PC-3 (cell line): ENCODE measurements at regions of chr3 and their contacts with region 1.

Region 1: GRCh38 chr3:169218314-169218983 is 445.1 kb downstream of the MECOM start:
- DNase-seq: peak; percentile 82
- ATAC-seq: peak; percentile 99
- H3K4me3 ChIP-seq: no peak overlapping the region
- H3K27ac ChIP-seq: no peak overlapping the region
- H3K4me1 ChIP-seq: peaks cover 5% of the 10 kb centered on the region; the same call in 1 of the 2 replicates
- H3K27me3 ChIP-seq: no peaks in the 10 kb centered on the region
- CTCF ChIP-seq: peak; percentile 86

Region 2: DNA sequence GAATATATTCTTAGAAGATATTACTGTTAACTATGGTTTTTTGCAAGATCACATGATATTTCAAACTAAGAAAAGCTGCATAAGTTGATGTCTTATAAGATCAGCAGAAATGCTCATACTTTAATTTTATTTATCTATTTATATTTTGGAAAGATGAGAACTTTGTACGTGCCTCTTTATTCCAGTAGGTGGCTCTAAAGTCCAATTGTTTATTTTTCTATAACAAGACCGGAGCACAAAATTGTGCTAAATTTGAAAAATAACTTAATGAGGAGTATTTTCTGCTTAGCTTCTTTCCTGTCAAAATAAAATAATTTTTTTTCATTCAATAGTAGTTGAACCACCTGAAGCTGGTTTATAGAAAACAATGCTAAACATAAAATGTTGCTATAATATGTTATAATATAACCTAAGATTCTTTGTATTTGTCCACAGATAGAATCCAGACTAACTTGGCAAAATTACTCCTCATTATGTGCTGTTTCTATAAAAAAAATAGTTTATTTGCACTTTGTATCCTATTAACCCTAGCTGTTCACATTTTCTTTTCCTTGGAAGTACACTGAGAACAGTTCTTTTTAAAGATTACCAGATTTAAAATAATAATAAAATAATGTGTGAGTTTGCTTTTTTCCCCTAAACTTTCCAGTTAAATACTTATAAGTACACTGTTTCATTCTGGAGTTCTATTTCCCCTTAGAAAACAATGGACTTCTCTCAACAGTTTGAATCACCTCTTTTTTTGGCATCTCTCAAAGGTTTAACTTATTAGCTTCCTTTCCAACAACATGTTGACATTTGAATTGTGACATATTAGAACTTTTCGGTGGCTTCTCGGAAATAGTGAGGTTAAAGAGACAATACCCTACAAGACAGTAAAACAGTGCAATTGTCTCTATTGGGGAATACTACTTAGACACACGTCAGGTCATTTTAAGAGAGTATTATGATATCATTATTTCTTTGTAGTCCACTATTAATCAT is 85.0 kb before region 1 on chr3:
- CTCF ChIA-PET with region 1: no interaction called
- POLR2A ChIA-PET with region 1: no interaction called
- intact Hi-C with region 1: loop called (anchors 5 kb)
- DNase-seq: peak; percentile 63
- ATAC-seq: peak; percentile 67
- H3K4me3 ChIP-seq: no peak overlapping the region
- H3K27ac ChIP-seq: no peak overlapping the region; the same call in 1 of the 2 replicates
- H3K4me1 ChIP-seq: peaks cover 23% of the 10 kb centered on the region
- H3K27me3 ChIP-seq: no peaks in the 10 kb centered on the region
- CTCF ChIP-seq: peak; percentile 80

Region 3: DNA sequence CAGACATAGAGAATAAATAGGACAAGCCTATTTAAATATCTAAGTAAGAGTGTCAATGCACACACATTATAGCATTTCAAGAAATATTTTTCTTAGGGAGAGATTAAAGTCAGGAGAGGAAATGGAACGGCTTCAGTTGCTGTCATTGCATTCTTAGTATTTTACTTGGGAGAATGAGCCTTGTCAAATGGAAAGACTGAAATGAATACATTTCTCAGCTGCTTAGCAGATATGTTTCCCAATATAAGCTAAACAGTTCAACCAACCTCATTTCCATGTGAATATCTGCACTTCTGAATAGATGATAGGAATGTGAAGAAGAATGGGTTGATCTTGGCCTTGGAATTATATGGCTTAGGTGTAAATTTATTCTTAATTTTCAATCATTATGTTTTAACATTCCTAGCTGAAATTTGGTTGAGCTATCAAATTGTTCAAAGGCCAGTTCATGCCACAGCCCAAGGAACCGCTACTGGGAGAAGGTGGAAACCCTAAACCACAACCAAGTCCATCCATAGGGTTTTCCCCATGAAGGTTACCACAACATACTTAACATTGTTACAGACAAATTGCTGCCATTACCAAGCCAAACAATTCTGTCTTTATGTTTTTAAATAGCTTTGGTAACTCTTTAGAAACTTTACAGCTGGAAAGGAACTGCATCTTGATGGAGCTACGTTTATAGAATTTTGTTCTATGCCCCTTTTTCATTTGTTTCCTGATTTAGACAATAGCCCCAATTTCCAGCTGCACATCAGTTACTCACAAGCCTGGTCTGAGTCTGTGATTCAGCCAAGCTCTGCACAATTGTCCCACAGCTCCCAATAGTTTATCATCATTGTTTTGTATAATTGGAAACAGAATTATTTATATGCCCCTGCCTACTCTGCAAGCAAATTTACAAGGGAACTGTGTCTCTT is 14.6 kb before region 1 on chr3:
- CTCF ChIA-PET with region 1: no interaction called
- POLR2A ChIA-PET with region 1: no interaction called
- intact Hi-C with region 1: no loop called
- DNase-seq: no peak
- ATAC-seq: no peak
- H3K4me3 ChIP-seq: no peak overlapping the region
- H3K27ac ChIP-seq: no peak overlapping the region
- H3K4me1 ChIP-seq: peaks cover 8% of the 10 kb centered on the region
- H3K27me3 ChIP-seq: no peaks in the 10 kb centered on the region
- CTCF ChIP-seq: no peak

Region 4: DNA sequence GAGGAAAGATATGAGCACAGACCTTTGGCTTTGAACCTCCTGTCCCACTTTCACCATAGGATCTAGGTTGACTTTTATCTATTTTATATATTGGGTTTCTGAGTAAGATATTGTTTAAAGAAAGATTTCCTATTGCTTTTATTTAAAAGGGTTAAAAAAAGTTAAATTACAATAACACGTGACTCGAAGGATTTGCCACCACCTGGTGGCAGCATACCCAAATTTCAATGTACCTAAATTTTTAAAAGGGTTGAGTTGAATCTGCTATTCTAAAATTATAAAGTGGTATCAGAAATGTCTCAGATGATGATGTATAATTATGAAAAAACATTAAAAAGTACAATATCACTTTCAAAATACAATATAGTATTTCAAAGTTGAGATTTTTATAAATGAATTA is 76.7 kb after region 1 on chr3:
- CTCF ChIA-PET with region 1: no interaction called
- POLR2A ChIA-PET with region 1: no interaction called
- intact Hi-C with region 1: loop called (anchors 2 kb)
- DNase-seq: peak; percentile 52
- ATAC-seq: no peak
- H3K4me3 ChIP-seq: no peak overlapping the region
- H3K27ac ChIP-seq: no peak overlapping the region
- H3K4me1 ChIP-seq: peaks cover 7% of the 10 kb centered on the region; the same call in 1 of the 2 replicates
- H3K27me3 ChIP-seq: no peaks in the 10 kb centered on the region
- CTCF ChIP-seq: peak; percentile 71

Region 5: DNA sequence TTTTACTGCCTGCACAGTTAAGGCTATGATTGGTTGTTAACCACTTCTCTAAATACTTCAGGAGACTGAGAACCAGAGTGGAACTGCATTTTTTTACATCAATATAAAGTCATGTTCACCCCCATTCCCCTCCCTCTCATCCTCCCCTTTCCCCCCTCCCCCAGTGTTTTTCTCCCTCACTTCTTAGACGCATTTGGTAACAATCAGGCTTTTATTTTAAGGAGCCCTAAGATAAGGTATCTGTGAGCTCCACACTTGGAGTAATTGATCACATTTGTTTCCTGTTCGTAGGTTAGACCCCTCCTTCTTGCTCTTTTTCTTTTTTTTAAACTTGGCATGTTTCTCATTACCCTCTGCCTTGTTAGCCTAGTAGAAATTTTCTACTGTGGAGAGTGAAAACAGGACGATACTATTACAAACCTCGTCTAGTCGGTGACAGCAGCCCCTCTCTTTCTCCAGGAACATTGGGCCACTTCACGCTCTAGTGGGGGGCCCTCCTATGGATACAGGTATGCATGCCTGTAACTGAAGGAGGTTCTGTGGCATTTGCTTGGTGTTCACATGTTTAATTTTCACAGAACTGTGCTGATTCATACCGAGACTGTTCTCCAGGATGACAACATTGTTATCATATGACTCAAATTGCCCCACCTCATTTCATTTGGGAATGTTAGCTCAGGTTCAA is 130.6 kb after region 1 on chr3:
- CTCF ChIA-PET with region 1: no interaction called
- POLR2A ChIA-PET with region 1: no interaction called
- intact Hi-C with region 1: loop called (anchors 5 kb)
- DNase-seq: peak; percentile 97
- ATAC-seq: peak; percentile 85
- H3K4me3 ChIP-seq: peak overlapping the region; percentile 47
- H3K27ac ChIP-seq: peak overlapping the region; percentile 89
- H3K4me1 ChIP-seq: peaks cover 52% of the 10 kb centered on the region
- H3K27me3 ChIP-seq: no peaks in the 10 kb centered on the region
- CTCF ChIP-seq: no peak

Region 6: DNA sequence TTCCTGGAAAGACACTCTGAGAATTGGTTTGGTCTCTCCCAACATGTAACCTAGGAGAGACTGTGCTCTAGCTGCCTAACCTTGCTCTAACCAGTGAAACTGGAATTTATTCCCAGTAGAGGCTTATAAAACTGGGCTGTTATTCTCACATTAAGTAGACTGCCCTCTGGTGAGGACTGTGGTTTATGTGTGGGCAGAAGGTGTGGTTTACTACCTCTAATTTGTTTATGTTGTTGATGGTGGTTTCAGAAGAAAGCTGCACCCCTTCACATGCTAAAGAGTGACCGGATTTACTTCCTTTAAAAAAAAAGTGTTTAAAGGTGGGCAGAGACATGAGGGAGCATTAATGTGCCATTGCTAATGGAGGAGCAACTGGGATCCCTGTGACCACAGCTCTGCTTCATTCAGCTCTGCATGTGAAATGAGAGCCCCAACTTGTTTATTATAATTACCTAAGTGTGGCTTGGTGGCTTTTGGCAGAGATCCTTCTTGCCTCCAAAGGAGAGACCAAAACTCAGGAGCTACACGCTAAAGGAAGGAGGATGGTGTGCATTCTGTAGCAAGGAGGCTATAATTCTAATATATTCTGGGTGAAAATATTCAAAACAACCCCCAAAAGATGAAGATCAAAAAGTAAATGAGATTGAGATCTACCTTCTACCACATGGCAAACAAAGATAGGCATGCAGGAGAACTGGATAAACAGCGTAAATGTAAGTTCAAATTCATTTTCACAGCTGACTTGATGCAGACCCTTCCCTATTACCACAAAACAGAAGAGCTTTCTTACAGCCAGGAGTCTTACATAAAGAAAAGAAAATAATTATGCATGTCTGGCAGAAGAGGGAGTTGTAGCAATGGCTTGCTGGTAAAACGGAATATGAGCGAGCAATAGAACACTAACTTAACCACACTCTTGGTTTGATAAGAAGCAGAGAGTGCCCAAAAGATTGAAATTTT is 172.1 kb after region 1 on chr3:
- CTCF ChIA-PET with region 1: no interaction called
- POLR2A ChIA-PET with region 1: no interaction called
- intact Hi-C with region 1: loop called (anchors 2 kb)
- DNase-seq: peak; percentile 57
- ATAC-seq: peak; percentile 87
- H3K4me3 ChIP-seq: no peak overlapping the region
- H3K27ac ChIP-seq: no peak overlapping the region
- H3K4me1 ChIP-seq: 0 out of 2 replicates have a peak, but pooled peaks cover 11% of the 10 kb centered on the region
- H3K27me3 ChIP-seq: no peaks in the 10 kb centered on the region
- CTCF ChIP-seq: peak; percentile 59

Region 7: DNA sequence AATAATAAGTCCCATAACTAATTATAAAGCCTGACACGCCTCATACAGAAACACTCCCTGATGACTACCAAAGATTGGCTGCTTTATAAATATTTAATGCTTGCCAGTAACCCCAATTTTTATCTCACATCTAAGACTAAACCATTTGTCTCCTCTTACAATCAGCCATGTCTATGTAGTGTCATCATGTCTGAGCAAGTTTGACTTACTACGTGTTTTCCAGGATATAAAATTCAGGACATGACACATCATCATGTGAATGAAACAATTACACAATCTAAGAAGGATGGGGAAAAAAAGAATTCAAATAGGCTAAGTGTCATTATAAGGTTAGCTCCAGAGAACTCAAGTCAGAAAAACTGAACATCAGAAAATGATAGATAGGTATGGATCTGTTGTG is 236.4 kb after region 1 on chr3:
- CTCF ChIA-PET with region 1: no interaction called
- POLR2A ChIA-PET with region 1: no interaction called
- intact Hi-C with region 1: no loop called
- DNase-seq: peak; percentile 82
- ATAC-seq: peak; percentile 77
- H3K4me3 ChIP-seq: no peak overlapping the region
- H3K27ac ChIP-seq: peak overlapping the region; percentile 75
- H3K4me1 ChIP-seq: peaks cover 25% of the 10 kb centered on the region
- H3K27me3 ChIP-seq: no peaks in the 10 kb centered on the region
- CTCF ChIP-seq: no peak

Region 8: GRCh38 chr3:169509359-169509758 is 290.9 kb after region 1 on chr3:
- CTCF ChIA-PET with region 1: no interaction called
- POLR2A ChIA-PET with region 1: no interaction called
- intact Hi-C with region 1: loop called (anchors 1 kb)
- DNase-seq: no peak
- ATAC-seq: no peak; the same call in 1 of the 2 replicates
- H3K4me3 ChIP-seq: no peak overlapping the region
- H3K27ac ChIP-seq: no peak overlapping the region
- H3K4me1 ChIP-seq: no peaks in the 10 kb centered on the region
- H3K27me3 ChIP-seq: no peaks in the 10 kb centered on the region
- CTCF ChIP-seq: no peak

Region 9: GRCh38 chr3:169668957-169669681 is 450.7 kb after region 1 on chr3:
- CTCF ChIA-PET with region 1: no interaction called
- POLR2A ChIA-PET with region 1: no interaction called
- intact Hi-C with region 1: loop called (anchors 1 kb)
- DNase-seq: peak; percentile 86
- ATAC-seq: peak; percentile 91
- H3K4me3 ChIP-seq: peak overlapping the region; percentile 75
- H3K27ac ChIP-seq: no peak overlapping the region
- H3K4me1 ChIP-seq: peaks cover 6% of the 10 kb centered on the region; the same call in 1 of the 2 replicates
- H3K27me3 ChIP-seq: no peaks in the 10 kb centered on the region
- CTCF ChIP-seq: peak; percentile 94

Region 10: DNA sequence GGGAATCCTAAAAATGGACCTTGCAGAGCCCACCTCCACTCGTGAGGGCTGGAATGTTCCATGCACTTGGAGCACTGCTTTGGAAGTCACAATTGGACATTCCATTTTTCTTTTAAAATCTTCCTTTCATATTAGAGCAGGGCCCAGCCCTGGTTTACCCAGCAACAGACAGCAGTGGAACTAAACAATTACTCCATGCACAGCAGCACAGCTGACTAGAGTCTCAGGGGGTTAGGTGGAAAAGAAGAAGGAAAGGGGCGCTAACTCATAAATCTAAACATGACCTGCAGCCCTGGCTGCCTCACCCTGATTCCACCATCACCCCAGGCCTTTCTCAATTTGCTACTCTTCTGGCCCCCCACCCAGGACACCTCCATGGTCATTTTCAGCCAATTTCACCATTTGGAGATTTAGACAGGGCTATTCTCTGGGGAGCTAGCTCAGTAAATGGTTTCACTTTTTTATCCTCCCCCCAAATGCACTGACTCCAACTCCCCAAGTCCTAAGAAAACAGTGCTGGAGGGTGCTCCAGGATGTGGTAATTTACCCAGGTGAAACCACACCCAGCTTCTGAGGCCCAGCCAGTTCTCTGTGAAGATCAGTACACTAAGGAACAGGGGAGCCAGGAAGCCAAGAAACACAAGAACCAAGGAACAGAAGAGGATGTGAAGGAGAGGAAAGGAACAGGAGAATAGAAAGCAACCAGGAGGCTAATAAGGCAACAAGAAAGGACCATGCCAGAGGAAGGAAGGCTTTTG is 652.9 kb after region 1 on chr3:
- CTCF ChIA-PET with region 1: no interaction called
- POLR2A ChIA-PET with region 1: no interaction called
- intact Hi-C with region 1: no loop called
- DNase-seq: peak; percentile 43
- ATAC-seq: peak; percentile 88
- H3K4me3 ChIP-seq: no peak overlapping the region
- H3K27ac ChIP-seq: no peak overlapping the region
- H3K4me1 ChIP-seq: peaks cover 10% of the 10 kb centered on the region
- H3K27me3 ChIP-seq: no peaks in the 10 kb centered on the region
- CTCF ChIP-seq: no peak